CD8-positive, alpha-beta T cell (primary cell): ENCODE measurements at regions of chr14 and their contacts with region 1.

Region 1: DNA sequence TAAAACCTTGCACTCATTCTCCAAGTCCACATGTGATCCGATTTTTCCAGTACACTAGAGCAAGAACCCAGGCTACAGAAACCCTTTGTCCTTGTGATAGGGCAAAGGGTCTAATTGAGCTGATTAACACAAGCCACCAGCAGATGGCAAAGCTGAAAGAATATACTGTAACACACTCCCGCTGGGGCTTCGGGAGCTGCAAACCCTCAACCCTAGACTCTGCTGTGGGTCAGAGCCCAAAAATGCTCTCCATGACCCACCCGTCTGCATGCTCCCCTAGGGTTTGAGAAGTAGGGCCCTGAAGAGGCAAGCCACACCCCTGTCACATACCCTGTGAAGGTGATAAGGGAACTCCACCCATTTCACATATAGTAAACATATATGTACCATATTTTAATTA is 33.6 kb upstream of the PCNX1 start:
- DNase-seq: peak in 3 of 9 experiments; percentile 41 to 50 (median 43)
- ATAC-seq: no peak
- H3K4me3 ChIP-seq: no peak overlapping the region
- H3K4me3 Mint-ChIP-seq: no peak overlapping the region
- H3K27ac ChIP-seq: no peak overlapping the region
- H3K27ac Mint-ChIP-seq: peak overlapping the region; percentile 9
- H3K4me1 ChIP-seq: peaks cover 17% of the 10 kb centered on the region
- H3K4me1 Mint-ChIP-seq: peaks cover 13% of the 10 kb centered on the region
- H3K27me3 ChIP-seq: no peaks in the 10 kb centered on the region
- H3K27me3 Mint-ChIP-seq: no peaks in the 10 kb centered on the region
- CTCF ChIP-seq: no peak

Region 2: DNA sequence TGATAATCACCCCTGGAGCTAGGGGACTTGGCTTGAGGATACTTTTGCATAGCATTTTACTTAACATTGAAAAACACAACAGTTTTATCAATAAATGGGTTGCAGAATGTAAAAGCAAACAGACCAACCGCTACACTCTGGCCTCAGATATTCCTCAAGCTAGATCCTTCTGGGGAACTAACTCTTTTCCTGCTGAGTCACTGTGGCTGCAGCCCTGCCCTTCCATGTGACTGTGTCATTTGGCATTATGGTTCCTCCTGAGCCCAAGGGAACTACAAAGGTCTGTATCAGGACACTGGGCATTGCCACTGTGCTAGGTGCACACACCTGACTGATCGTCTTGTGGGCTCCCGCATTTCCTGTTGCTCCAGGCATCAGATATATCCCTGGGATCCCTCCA is 175.3 kb before region 1 on chr14:
- CTCF ChIA-PET with region 1: no interaction called
- POLR2A ChIA-PET with region 1: no interaction called
- intact Hi-C with region 1: no loop called
- DNase-seq: no peak
- ATAC-seq: no peak
- H3K4me3 ChIP-seq: no peak overlapping the region
- H3K4me3 Mint-ChIP-seq: no peak overlapping the region
- H3K27ac ChIP-seq: no peak overlapping the region
- H3K27ac Mint-ChIP-seq: no peak overlapping the region
- H3K4me1 ChIP-seq: no peaks in the 10 kb centered on the region
- H3K4me1 Mint-ChIP-seq: no peaks in the 10 kb centered on the region
- H3K27me3 ChIP-seq: no peaks in the 10 kb centered on the region
- H3K27me3 Mint-ChIP-seq: no peaks in the 10 kb centered on the region
- CTCF ChIP-seq: no peak

Region 3: DNA sequence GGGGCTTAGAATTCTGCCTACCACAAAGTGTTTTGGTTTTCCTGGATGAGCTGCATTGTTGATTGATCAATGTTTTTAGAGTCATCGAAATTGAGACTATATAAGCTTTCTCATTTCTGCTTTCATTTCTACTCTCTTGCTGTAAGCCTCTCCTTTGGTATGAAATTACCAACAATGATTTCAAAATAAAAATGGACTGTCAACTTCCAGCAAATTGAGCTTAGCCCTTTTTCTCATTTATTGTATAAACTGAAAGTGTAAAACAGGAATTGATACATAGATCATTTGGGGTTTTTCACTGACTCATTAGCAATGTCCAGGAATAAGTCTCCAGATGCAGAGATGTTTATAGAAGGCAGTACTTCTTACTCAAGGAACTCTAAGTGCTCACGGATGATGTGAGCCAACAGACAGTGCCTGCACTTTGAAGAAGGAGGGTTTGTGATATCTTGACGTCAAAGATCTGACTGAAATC is 13.6 kb after region 1 on chr14:
- CTCF ChIA-PET with region 1: interaction called, 6 read pairs
- POLR2A ChIA-PET with region 1: interaction called, 3 read pairs
- intact Hi-C with region 1: loop called in 1 of 2 experiments (anchors 2 kb)
- DNase-seq: peak in 1 of 9 experiments; percentile 37
- ATAC-seq: peak; percentile 19
- H3K4me3 ChIP-seq: peak overlapping the region in 1 of 2 experiments; percentile 21
- H3K4me3 Mint-ChIP-seq: peak overlapping the region; percentile 58
- H3K27ac ChIP-seq: peak overlapping the region in 1 of 2 experiments; percentile 58
- H3K27ac Mint-ChIP-seq: peak overlapping the region; percentile 69
- H3K4me1 ChIP-seq: peaks cover 67% of the 10 kb centered on the region
- H3K4me1 Mint-ChIP-seq: peaks cover 69% of the 10 kb centered on the region
- H3K27me3 ChIP-seq: no peaks in the 10 kb centered on the region
- H3K27me3 Mint-ChIP-seq: no peaks in the 10 kb centered on the region
- CTCF ChIP-seq: no peak